ENCODE measurements at regions of chr2 and their contacts with region 1.

Region 1: DNA sequence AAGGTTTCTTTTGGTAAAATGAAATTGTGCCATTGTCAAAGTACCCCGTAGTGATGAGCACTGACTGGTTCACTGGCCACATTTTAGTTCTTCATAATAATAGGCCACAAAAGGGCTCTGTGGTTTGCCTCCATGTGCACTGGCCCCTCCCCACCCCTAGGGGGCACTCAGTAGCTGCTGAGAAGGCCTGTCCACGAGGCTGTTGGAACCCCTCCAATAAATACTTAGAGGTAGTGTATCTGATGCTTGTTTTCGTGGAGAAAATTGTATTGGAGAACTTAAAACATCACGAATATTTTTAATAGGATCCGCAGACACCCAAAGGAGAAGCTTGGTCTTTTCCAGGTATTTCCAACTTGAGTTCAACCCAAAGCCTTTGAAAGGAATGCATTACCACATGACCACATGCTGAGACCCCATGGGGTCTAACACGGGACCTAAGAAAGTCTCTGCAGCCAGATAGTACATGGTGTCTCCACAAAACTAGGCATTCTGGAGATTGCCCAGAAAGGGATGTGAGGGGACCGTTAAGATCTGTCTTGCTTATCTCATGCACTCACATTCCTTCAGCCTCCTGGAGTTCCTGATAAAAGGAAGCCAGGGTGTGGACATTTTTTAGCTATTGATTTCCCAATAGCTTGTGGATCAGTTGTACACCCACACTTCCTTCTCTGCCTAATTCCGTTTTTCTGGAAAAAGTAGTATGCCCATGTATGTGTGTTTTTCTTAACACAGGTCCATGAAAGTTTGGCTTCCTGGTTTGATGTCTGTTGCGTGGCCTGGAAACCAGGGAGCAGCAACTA is 28.5 kb upstream of the NOSTRIN start:
- DNase-seq: no peak

Region 2: GRCh38 chr2:168649105-168649504 is 124.8 kb before region 1 on chr2:
- intact Hi-C with region 1: no loop called
- DNase-seq: no peak

Region 3: GRCh38 chr2:168816369-168816768 is 42.4 kb after region 1 on chr2:
- intact Hi-C with region 1: loop called in 1 of 2 experiments (anchors 1 kb)
- DNase-seq: no peak

Region 4: DNA sequence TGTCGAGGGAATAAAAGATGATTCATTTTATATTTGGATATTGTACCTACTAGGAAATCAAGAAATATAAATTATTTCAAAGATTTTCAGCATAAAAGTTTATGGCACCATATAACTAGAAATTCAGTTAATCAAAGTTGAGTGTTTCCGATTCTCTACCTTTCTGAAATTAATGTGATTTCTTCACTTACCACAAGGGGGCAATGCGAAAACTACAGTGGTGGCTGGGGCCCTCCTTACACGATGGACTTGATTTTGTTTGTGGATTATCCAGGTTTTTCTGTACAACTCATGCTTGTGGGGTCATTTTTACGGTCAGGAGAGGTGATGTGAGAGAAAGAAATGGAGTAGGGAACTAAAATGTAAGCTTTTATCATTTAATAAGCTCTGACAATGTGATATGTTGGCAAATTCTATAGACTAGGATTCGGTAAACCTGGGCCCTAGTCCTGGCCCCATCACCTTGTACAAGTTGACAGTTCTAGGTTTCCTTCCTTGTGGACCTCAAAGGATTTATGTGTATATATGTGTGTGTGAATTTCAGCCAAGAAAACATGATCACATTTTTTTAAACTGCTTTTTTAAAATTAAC is 174.8 kb after region 1 on chr2:
- intact Hi-C with region 1: loop called in 1 of 2 experiments (anchors 5 kb)
- DNase-seq: no peak